ENCODE measurements at regions of chr9 and their contacts with region 1.

Region 1: GRCh38 chr9:6353851-6354686 is 25.9 kb downstream of the TPD52L3 start:
- DNase-seq: no peak
- ATAC-seq: peak; percentile 93 to 96 (median 94)
- H3K4me3 ChIP-seq: no peak overlapping the region
- H3K27ac ChIP-seq: no peak overlapping the region
- H3K4me1 ChIP-seq: no peaks in the 10 kb centered on the region
- H3K27me3 ChIP-seq: no peaks in the 10 kb centered on the region
- CTCF ChIP-seq: peak; percentile 75 to 81 (median 79)
- POLR2A ChIP-seq: no peak

Region 2: DNA sequence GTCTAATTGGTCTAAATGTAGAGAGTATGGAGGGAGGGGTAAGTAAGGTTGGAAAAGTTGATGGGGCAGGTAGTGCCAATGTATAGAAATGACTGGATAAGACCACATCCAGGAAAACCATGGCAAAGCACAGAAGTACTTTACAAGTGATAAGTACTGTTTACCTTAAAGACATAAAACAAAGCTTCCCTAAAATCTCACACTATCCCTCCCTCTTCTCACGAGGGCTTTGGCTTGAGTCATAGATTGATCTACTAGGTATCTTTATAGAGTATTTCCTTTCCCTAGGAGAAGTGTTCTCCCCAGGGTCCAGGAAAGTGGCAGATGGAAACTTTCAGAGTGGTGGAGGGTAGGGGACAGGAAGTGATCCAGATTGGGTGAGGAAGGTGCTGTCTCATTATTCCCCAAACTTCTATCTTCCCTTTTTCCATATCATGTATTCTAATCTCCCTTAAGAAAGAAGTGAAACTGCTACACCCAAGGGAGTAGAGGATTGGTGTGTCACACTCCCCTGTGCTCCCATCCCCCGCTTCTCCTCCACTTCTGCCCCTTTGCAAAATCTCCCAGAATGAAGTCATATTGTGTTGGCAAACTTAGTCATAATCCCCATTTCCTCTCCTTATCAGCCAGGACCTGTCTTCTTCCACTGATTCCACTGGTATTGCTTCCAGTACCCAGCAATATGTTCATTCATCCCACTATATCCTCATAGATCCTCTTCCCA is 123.9 kb before region 1 on chr9:
- intact Hi-C with region 1: no loop called
- DNase-seq: no peak
- ATAC-seq: peak in 1 of 4 donors; percentile 37
- H3K4me3 ChIP-seq: no peak overlapping the region
- H3K27ac ChIP-seq: no peak overlapping the region
- H3K4me1 ChIP-seq: no peaks in the 10 kb centered on the region
- H3K27me3 ChIP-seq: no peaks in the 10 kb centered on the region
- CTCF ChIP-seq: no peak
- POLR2A ChIP-seq: no peak

Region 3: GRCh38 chr9:6549106-6549800 is 195.2 kb after region 1 on chr9:
- intact Hi-C with region 1: loop called in 1 of 2 experiments (anchors 10 kb)
- DNase-seq: no peak
- ATAC-seq: peak in 2 of 4 donors; percentile 14 to 21
- H3K4me3 ChIP-seq: no peak overlapping the region
- H3K27ac ChIP-seq: no peak overlapping the region
- H3K4me1 ChIP-seq: no peaks in the 10 kb centered on the region
- H3K27me3 ChIP-seq: no peaks in the 10 kb centered on the region
- CTCF ChIP-seq: no peak
- POLR2A ChIP-seq: no peak

Region 4: GRCh38 chr9:6566409-6567139 is 212.5 kb after region 1 on chr9:
- intact Hi-C with region 1: loop called in 1 of 2 experiments (anchors 5 kb)
- DNase-seq: no peak
- ATAC-seq: peak in 2 of 4 donors; percentile 54 to 62
- H3K4me3 ChIP-seq: no peak overlapping the region
- H3K27ac ChIP-seq: no peak overlapping the region
- H3K4me1 ChIP-seq: no peaks in the 10 kb centered on the region
- H3K27me3 ChIP-seq: no peaks in the 10 kb centered on the region
- CTCF ChIP-seq: no peak
- POLR2A ChIP-seq: no peak